Gastrocnemius medialis (tissue), 4 donors: ENCODE measurements at regions of chr6 and their contacts with region 1.

Region 1: GRCh38 chr6:64330694-64331307 is 695.2 kb downstream of the PHF3 start:
- DNase-seq: no peak
- ATAC-seq: no peak
- H3K4me3 ChIP-seq: no peak overlapping the region
- H3K27ac ChIP-seq: no peak overlapping the region
- H3K4me1 ChIP-seq: no peaks in the 10 kb centered on the region
- H3K27me3 ChIP-seq: no peaks in the 10 kb centered on the region
- CTCF ChIP-seq: peak in 2 of 5 experiments; percentile 20 to 24
- POLR2A ChIP-seq: no peak

Region 2: GRCh38 chr6:63923139-63923739 is 407.6 kb before region 1 on chr6:
- in situ Hi-C with region 1: no loop called
- intact Hi-C with region 1: loop called (anchors 5 kb)
- DNase-seq: no peak
- ATAC-seq: peak in 1 of 2 donors; percentile 45
- H3K4me3 ChIP-seq: no peak overlapping the region
- H3K27ac ChIP-seq: no peak overlapping the region
- H3K4me1 ChIP-seq: no peaks in the 10 kb centered on the region
- H3K27me3 ChIP-seq: no peaks in the 10 kb centered on the region
- CTCF ChIP-seq: peak; percentile 11 to 61 (median 46)
- POLR2A ChIP-seq: no peak

Region 3: GRCh38 chr6:64376394-64376793 is 45.6 kb after region 1 on chr6:
- in situ Hi-C with region 1: no loop called
- intact Hi-C with region 1: no loop called
- DNase-seq: no peak
- ATAC-seq: no peak
- H3K4me3 ChIP-seq: no peak overlapping the region
- H3K27ac ChIP-seq: no peak overlapping the region
- H3K4me1 ChIP-seq: no peaks in the 10 kb centered on the region
- H3K27me3 ChIP-seq: no peaks in the 10 kb centered on the region
- CTCF ChIP-seq: no peak
- POLR2A ChIP-seq: no peak

Region 4: GRCh38 chr6:64811119-64811518 is 480.3 kb after region 1 on chr6:
- in situ Hi-C with region 1: no loop called
- intact Hi-C with region 1: no loop called
- DNase-seq: no peak
- ATAC-seq: no peak
- H3K4me3 ChIP-seq: no peak overlapping the region
- H3K27ac ChIP-seq: no peak overlapping the region
- H3K4me1 ChIP-seq: no peaks in the 10 kb centered on the region
- H3K27me3 ChIP-seq: no peaks in the 10 kb centered on the region
- CTCF ChIP-seq: no peak
- POLR2A ChIP-seq: no peak